Activated naive CD4-positive, alpha-beta T cell treated with anti-CD3 and anti-CD28 coated beads for 36 hours (primary cell): ENCODE measurements at regions of chr17 and their contacts with region 1.

Region 1: DNA sequence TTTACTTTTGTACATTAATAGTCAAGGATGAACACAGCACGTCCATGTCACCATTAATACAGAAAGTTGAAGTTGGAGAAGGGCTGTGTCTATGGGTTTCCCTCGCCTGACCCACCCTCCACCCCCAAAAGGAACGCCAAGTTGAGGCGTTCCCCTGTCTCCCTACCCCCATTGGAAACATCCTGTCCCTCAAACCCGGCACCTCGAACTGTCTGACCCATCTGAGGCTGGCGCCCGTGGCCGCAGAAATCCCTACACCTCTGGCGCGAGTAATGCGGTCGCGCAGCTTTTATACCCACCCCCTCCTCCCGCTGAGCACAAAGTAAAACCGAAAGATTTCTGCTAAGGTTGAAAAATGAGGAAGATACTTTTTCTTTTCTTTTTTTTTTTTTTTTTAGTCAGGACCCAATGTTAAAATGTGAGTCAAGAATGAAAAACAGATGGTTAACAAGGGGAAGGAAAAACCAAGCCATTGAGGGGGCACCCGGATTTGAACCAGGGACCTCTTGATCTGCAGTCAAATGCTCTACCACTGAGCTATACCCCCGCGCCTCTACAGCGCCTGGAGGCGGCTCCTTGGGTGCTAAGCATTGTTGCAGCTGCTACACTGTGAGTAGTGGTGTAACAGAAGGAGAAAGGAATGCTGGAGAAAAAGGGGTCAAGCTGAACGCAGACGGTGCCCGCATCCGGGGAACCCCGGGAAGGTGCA is 887 bp upstream of the LASP1 start:
- DNase-seq: peak; percentile 95
- H3K4me3 Mint-ChIP-seq: peak overlapping the region; percentile 98
- H3K27ac Mint-ChIP-seq: peak overlapping the region; percentile 98
- H3K4me1 Mint-ChIP-seq: peaks cover 44% of the 10 kb centered on the region
- H3K27me3 Mint-ChIP-seq: peaks cover 2% of the 10 kb centered on the region

Region 2: GRCh38 chr17:38752119-38752929 is 116.6 kb before region 1 on chr17 and contains the start of gene PSMB3:
- CTCF ChIA-PET with region 1: no interaction called
- intact Hi-C with region 1: loop called (anchors 1 kb)
- DNase-seq: peak; percentile 99
- H3K4me3 Mint-ChIP-seq: peak within 1 kb of the TSS; percentile 91
- H3K27ac Mint-ChIP-seq: peak within 1 kb of the TSS; percentile 95
- H3K4me1 Mint-ChIP-seq: peaks cover 48% of the 10 kb centered on the region
- H3K27me3 Mint-ChIP-seq: peaks cover 26% of the 10 kb centered on the region
- total RNA-seq, gene PSMB3: 368 to 369 TPM

Region 3: GRCh38 chr17:38768417-38768816 is 100.6 kb before region 1 on chr17:
- CTCF ChIA-PET with region 1: no interaction called
- intact Hi-C with region 1: no loop called
- DNase-seq: no peak
- H3K4me3 Mint-ChIP-seq: no peak overlapping the region
- H3K27ac Mint-ChIP-seq: no peak overlapping the region
- H3K4me1 Mint-ChIP-seq: no peaks in the 10 kb centered on the region
- H3K27me3 Mint-ChIP-seq: no peaks in the 10 kb centered on the region

Region 4: DNA sequence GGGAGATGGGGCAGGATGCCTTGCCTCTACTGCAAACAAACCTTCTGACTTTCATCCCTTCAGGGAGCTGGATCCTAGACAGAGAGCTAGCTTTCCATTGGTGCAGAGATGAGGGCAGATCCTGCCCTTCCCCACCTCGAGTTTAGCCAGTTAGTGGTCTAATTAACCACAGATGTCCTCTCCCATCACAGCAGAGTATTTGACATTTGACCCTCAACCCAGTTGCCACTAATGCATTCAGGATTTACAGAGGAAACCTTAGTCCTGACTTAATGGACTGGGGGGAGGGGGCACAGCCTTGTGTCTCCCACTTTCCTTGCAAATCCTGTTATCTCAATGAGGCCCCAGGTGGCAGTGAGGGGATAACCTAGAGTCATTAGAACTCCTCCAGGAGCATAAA is 79.8 kb before region 1 on chr17:
- CTCF ChIA-PET with region 1: no interaction called
- intact Hi-C with region 1: no loop called
- DNase-seq: no peak
- H3K4me3 Mint-ChIP-seq: no peak overlapping the region
- H3K27ac Mint-ChIP-seq: no peak overlapping the region
- H3K4me1 Mint-ChIP-seq: peaks cover 15% of the 10 kb centered on the region
- H3K27me3 Mint-ChIP-seq: no peaks in the 10 kb centered on the region

Region 5: DNA sequence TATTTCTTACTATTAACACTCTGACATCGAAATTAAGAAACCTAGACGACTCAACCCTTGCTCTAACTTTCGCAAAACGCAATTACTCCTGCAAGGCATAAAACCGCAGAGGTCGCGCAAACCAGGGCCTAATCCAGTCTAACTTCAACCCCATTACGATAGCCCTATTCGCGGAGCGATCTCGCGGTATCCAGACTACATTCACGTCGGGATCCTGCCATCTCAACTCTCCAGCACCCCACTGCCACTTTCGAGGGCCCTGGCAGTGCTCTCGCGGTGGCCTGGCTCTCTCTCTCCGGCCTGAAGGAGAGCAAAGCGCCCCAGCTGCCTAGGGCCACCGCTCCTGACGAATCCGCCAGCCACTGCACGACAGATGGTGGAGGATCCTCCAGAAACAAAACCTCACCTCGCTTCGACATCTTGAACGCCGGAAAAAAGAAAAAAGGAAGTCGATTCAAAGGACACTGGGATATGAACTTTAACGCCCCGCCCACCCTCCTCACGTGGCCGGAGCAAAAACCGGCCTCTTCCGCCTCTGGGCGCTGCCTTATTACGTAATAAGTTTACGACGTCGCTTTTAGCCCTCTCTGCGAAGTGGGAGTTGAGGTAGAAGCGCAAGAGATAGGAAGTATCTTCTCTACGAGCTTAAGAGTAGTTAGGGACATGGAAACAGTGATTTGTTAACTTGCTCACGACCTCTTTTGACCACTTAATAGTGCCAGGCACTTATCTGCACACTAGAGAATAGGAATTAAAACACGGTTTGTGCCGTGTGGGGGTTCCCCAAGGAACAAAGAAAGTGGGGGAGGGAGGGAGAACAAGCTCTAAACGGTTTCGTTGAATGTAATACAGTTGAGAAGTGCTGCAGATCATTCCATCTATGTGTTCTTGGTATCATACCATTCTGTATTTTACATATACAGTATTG is 15.4 kb before region 1 on chr17 and contains the start of gene RPL23:
- CTCF ChIA-PET with region 1: interaction called, 25 read pairs
- intact Hi-C with region 1: loop called (anchors 1 kb)
- DNase-seq: peak; percentile 95
- H3K4me3 Mint-ChIP-seq: peak within 1 kb of the TSS; percentile 96
- H3K27ac Mint-ChIP-seq: peak within 1 kb of the TSS; percentile 99
- H3K4me1 Mint-ChIP-seq: peaks cover 43% of the 10 kb centered on the region
- H3K27me3 Mint-ChIP-seq: no peaks in the 10 kb centered on the region
- total RNA-seq, gene RPL23: 2,241 to 2,332 TPM

Region 6: GRCh38 chr17:38918124-38918913 is 49.3 kb after region 1 on chr17:
- CTCF ChIA-PET with region 1: interaction called, 10 read pairs
- intact Hi-C with region 1: no loop called
- DNase-seq: no peak
- H3K4me3 Mint-ChIP-seq: no peak overlapping the region
- H3K27ac Mint-ChIP-seq: peak overlapping the region; percentile 36
- H3K4me1 Mint-ChIP-seq: peaks cover 7% of the 10 kb centered on the region
- H3K27me3 Mint-ChIP-seq: no peaks in the 10 kb centered on the region

Region 7: DNA sequence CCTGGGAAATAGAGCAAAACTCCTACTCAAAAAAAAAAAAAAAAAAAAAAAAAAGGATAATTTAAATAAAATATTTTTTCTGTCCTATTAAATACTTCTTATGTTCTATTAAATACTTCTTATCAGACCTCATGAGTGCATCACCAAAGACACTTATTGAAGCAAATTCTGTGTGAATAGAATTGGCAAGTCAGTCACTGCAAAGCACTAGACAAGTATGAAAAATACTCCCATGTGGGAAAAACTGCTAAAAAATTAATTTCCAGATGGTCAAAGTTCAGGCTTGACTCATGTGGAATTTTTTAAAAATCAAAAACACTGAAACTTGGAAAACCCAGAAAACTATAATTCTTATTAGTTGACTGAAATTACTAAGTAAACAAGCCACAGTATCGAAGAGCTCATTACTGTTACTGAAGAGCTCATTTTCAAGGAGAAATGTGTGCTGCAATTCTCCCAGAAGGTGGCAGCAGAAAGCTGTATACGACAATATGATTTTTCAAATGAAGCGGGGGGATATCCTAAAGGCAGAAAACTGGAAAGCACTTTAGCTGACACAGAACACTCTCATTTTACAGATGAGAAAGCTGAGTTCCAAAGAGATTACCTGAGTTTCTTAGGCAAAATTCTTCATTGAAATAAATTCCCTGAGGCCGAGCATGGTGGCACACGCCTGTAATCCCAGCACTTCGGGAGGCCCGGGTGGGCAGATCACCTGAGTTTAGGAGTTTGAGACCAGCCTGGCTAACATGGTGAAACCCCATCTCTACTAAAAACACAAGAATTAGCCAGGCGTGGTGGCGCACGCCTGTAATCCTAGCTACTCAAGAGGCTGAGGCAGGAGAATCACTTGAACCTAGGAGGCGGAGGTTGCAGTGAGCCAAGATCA is 114.1 kb after region 1 on chr17:
- CTCF ChIA-PET with region 1: interaction called, 16 read pairs
- intact Hi-C with region 1: loop called (anchors 1 kb)
- DNase-seq: peak; percentile 66
- H3K4me3 Mint-ChIP-seq: no peak overlapping the region
- H3K27ac Mint-ChIP-seq: no peak overlapping the region
- H3K4me1 Mint-ChIP-seq: no peaks in the 10 kb centered on the region
- H3K27me3 Mint-ChIP-seq: no peaks in the 10 kb centered on the region

Region 8: GRCh38 chr17:39153599-39154051 is 284.7 kb after region 1 on chr17:
- CTCF ChIA-PET with region 1: interaction called, 7 read pairs
- intact Hi-C with region 1: loop called (anchors 1 kb)
- DNase-seq: peak; percentile 96
- H3K4me3 Mint-ChIP-seq: peak overlapping the region; percentile 94
- H3K27ac Mint-ChIP-seq: peak overlapping the region; percentile 95
- H3K4me1 Mint-ChIP-seq: peaks cover 27% of the 10 kb centered on the region
- H3K27me3 Mint-ChIP-seq: peaks cover 4% of the 10 kb centered on the region

Region 9: DNA sequence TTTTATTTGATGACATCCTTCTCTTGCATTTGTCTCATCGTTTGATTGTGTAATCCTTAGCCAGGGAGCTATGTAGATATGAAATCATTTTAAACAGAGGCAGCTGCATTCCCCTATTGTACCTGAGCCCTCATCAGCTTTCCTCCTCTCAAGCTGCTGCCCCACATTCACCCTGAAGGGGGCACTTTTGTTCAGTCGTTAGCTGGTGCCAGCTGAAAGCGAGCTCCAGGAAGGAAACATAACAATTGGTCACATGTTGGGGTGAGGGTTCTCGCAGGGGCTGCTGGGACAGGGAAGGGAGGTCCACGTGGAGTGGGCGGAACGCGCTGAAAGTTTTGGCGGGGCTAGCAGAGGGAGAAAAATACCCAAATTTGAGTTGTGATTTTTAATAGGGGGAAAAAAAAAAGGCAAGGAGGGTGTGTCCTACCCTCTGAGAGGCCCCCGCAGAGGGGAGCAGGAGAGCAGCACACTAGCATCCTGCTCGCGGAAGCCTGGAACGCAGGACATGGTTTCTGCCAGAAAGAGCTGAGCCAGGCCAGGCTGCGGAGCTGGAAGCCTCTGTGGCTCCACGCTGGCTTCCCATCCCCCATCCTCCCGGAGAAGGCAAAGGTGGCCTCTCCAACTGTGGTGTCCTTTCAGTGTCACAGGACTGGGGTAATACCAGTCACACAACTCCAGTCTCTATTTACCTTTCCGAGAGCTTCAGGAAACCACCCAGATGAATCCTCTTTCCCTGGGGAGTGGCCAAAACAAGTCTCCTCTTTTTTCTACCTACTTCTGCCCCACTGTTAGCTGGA is 1244.3 kb after region 1 on chr17:
- CTCF ChIA-PET with region 1: no interaction called
- intact Hi-C with region 1: loop called (anchors 5 kb)
- DNase-seq: peak; percentile 98
- H3K4me3 Mint-ChIP-seq: peak overlapping the region; percentile 81
- H3K27ac Mint-ChIP-seq: peak overlapping the region; percentile 91
- H3K4me1 Mint-ChIP-seq: peaks cover 52% of the 10 kb centered on the region
- H3K27me3 Mint-ChIP-seq: no peaks in the 10 kb centered on the region